ENCODE measurements at regions of chr4 and their contacts with region 1.

Region 1: DNA sequence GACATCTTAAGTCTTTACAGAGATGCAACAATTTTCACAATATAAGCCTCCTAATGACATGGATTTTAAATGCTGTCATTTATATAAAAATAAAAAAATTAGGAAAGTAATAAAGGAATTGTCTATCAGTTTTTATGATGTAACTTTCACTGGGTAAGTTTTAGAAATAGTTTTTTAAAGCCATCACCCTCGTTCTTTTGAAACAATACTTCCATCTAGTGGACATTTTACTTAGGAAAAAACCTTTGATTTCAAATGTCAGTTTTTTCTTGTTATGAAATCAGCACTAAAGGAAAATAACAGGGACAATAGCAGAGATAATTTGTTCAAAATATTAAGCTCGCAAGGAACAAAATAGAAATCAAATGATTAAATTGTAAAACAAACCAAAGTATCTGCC is 24.3 kb upstream of the NDNF start:
- DNase-seq: peak in 1 of 3 donors; percentile 17
- H3K4me3 ChIP-seq: no peak overlapping the region
- H3K4me3 Mint-ChIP-seq: no peak overlapping the region
- H3K27ac ChIP-seq: no peak overlapping the region
- H3K27ac Mint-ChIP-seq: no peak overlapping the region
- H3K4me1 ChIP-seq: peaks cover 15 to 17% of the 10 kb centered on the region in 2 donors
- H3K4me1 Mint-ChIP-seq: no peaks in the 10 kb centered on the region
- H3K27me3 ChIP-seq: peaks cover 2 to 5% of the 10 kb centered on the region in 2 donors
- H3K27me3 Mint-ChIP-seq: peaks cover 0 to 13% (median 3%) of the 10 kb centered on the region in 3 donors
- CTCF ChIP-seq: peak; percentile 44

Region 2: GRCh38 chr4:120156120-120156718 is 940.4 kb before region 1 on chr4:
- intact Hi-C with region 1: loop called in 1 of 2 experiments (anchors 10 kb)
- DNase-seq: peak; percentile 26 to 49 (median 32)
- H3K4me3 ChIP-seq: no peak overlapping the region
- H3K4me3 Mint-ChIP-seq: no peak overlapping the region
- H3K27ac ChIP-seq: no peak overlapping the region
- H3K27ac Mint-ChIP-seq: no peak overlapping the region
- H3K4me1 ChIP-seq: no peaks in the 10 kb centered on the region
- H3K4me1 Mint-ChIP-seq: no peaks in the 10 kb centered on the region
- H3K27me3 ChIP-seq: no peaks in the 10 kb centered on the region
- H3K27me3 Mint-ChIP-seq: peaks cover under 1 to 4% (median 2%) of the 10 kb centered on the region in 3 donors
- CTCF ChIP-seq: peak; percentile 79

Region 3: GRCh38 chr4:121034015-121034414 is 62.6 kb before region 1 on chr4:
- intact Hi-C with region 1: no loop called
- DNase-seq: peak in 1 of 3 donors; percentile 12
- H3K4me3 ChIP-seq: no peak overlapping the region
- H3K4me3 Mint-ChIP-seq: no peak overlapping the region
- H3K27ac ChIP-seq: no peak overlapping the region
- H3K27ac Mint-ChIP-seq: no peak overlapping the region
- H3K4me1 ChIP-seq: no peaks in the 10 kb centered on the region
- H3K4me1 Mint-ChIP-seq: peaks cover 4% of the 10 kb centered on the region
- H3K27me3 ChIP-seq: no peaks in the 10 kb centered on the region
- H3K27me3 Mint-ChIP-seq: peaks cover 0 to 8% (median 0%) of the 10 kb centered on the region in 3 donors
- CTCF ChIP-seq: no peak

Measured in CD14-positive monocyte (primary cell).